ENCODE measurements at regions of chr4 and their contacts with region 1.

Region 1: GRCh38 chr4:3442959-3443749 is 1.4 kb downstream of the HGFAC start:
- DNase-seq: peak; percentile 49 to 65 (median 58)
- H3K4me3 ChIP-seq: no peak overlapping the region
- H3K4me3 Mint-ChIP-seq: no peak overlapping the region
- H3K27ac ChIP-seq: no peak overlapping the region
- H3K27ac Mint-ChIP-seq: no peak overlapping the region
- H3K4me1 ChIP-seq: peaks cover 5 to 6% of the 10 kb centered on the region in 2 donors
- H3K4me1 Mint-ChIP-seq: peaks cover 10% of the 10 kb centered on the region
- H3K27me3 ChIP-seq: no peaks in the 10 kb centered on the region
- H3K27me3 Mint-ChIP-seq: peaks cover 0 to 3% (median 1%) of the 10 kb centered on the region in 3 donors
- CTCF ChIP-seq: peak; percentile 100

Region 2: GRCh38 chr4:3269991-3270611 is 173.1 kb before region 1 on chr4:
- intact Hi-C with region 1: no loop called
- DNase-seq: no peak
- H3K4me3 ChIP-seq: no peak overlapping the region
- H3K4me3 Mint-ChIP-seq: no peak overlapping the region
- H3K27ac ChIP-seq: no peak overlapping the region
- H3K27ac Mint-ChIP-seq: no peak overlapping the region
- H3K4me1 ChIP-seq: no peaks in the 10 kb centered on the region
- H3K4me1 Mint-ChIP-seq: no peaks in the 10 kb centered on the region
- H3K27me3 ChIP-seq: no peaks in the 10 kb centered on the region
- H3K27me3 Mint-ChIP-seq: peaks cover 0 to 6% (median 1%) of the 10 kb centered on the region in 3 donors
- CTCF ChIP-seq: no peak

Region 3: DNA sequence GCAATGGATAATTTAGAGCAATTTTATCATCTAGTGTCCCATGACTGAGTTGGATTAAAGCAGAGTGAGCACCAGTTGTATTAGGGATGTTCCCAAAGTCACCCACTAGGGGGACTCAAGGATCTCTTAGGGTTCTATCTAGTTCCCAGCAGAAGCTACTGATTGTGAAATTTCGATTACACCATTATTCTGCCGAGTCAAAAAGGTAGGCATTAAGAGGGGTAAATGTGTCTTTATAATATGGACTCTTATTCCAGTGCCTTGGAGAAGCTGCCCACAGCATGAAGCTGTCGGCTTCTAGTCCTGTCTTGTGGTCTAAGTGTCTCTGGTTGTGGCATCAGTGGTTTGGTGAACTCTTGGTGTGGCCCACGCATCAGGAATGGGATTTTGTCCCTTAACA is 97.0 kb before region 1 on chr4:
- intact Hi-C with region 1: loop called (anchors 1 kb)
- DNase-seq: peak; percentile 78 to 96 (median 85)
- H3K4me3 ChIP-seq: no peak overlapping the region
- H3K4me3 Mint-ChIP-seq: peak overlapping the region in 1 of 2 donors; percentile 23
- H3K27ac ChIP-seq: no peak overlapping the region
- H3K27ac Mint-ChIP-seq: peak overlapping the region in 2 of 7 donors; percentile 3 to 44
- H3K4me1 ChIP-seq: peaks cover 5 to 7% of the 10 kb centered on the region in 2 donors
- H3K4me1 Mint-ChIP-seq: peaks cover 16% of the 10 kb centered on the region
- H3K27me3 ChIP-seq: no peaks in the 10 kb centered on the region
- H3K27me3 Mint-ChIP-seq: peaks cover 0 to 2% (median 0%) of the 10 kb centered on the region in 3 donors
- CTCF ChIP-seq: peak; percentile 96

Region 4: DNA sequence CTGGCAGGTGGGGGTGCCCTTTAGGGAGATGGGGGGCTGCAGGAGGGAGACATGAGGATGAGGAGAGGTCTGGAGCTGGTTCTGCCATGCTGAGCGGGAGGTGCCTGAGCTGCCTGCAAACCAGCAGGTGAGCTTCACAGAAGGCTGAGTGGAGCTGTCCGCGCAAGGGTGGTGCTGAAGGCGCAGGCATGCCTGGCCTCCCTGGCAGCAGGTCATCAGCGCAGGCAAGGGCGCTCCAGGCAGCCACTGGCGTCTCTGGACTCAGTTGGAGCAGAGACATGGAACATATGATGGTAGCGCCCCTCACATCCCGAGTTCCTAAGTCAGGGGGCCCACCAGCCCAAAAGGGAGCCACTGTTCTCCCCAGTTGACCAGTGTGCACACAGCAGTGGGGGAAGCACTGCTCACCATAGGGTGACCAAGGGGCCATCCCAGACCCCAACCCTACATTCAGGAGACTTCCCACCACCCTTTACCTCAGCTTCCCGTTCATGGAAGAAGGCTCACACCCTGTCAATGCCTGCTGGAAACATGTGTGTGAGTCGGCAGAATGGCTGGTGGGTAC is 348.9 kb after region 1 on chr4:
- intact Hi-C with region 1: no loop called
- DNase-seq: no peak
- H3K4me3 ChIP-seq: no peak overlapping the region
- H3K4me3 Mint-ChIP-seq: no peak overlapping the region
- H3K27ac ChIP-seq: no peak overlapping the region
- H3K27ac Mint-ChIP-seq: no peak overlapping the region
- H3K4me1 ChIP-seq: no peaks in the 10 kb centered on the region
- H3K4me1 Mint-ChIP-seq: no peaks in the 10 kb centered on the region
- H3K27me3 ChIP-seq: no peaks in the 10 kb centered on the region
- H3K27me3 Mint-ChIP-seq: peaks cover 1 to 6% (median 4%) of the 10 kb centered on the region in 3 donors
- CTCF ChIP-seq: no peak